A549 (cell line): ENCODE measurements at regions of chr6 and their contacts with region 1.

Region 1: GRCh38 chr6:43506667-43507471 is 3.3 kb downstream of the LRRC73 start:
- DNase-seq: peak; percentile 55 to 83
- ATAC-seq: peak; percentile 62 to 83
- H3K4me3 ChIP-seq: no peak overlapping the region
- H3K27ac ChIP-seq: no peak overlapping the region
- H3K4me1 ChIP-seq: peaks cover 9% of the 10 kb centered on the region
- CTCF ChIP-seq: peak; percentile 79
- EP300 ChIP-seq: no peak
- POLR2A ChIP-seq: no peak
- RAD21 ChIP-seq: peak; percentile 72 to 84

Region 2: DNA sequence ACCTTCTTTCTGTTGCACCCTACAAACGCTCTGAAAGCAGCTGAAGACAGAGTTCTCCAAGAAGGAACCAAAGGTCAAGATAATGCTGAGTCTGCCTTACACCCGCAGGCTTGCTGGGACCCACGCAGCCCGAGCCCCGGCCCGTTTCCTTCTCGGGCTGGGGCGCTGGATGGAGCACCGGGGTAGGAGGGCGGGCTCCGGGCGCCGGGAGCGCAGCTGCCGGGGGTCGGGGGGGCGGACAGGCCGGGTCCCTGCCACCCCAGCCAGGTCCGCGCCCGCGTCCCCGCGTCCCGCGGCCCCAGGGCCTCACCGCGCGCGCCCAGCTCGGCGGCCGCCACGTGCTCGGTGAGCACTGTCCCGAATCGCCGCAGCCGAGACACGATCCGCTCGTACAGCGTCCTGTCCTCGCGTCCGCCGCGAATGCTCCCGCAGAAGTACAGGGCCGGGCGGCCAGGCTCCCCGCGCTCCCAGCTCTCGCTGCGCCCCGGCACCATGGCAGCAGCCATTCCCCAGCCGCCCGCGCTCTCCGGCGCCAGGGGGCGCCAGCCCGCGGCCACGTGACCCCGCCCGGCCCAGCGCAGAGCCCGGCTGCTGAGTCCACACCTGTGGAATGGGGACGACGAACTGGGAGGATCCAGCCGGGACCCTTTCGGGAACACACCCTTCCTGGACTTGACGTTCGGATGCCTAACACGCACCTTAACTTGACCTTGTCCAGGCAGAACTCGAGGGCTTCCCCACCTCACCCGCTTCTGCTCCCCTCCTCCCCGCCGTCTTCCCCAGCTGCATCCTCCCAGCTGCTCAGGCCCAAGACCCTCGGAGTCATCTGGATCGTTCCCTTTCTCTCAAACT is 277.7 kb before region 1 on chr6 and contains the start of gene DNPH1:
- CTCF ChIA-PET with region 1: interaction called, 27 read pairs
- POLR2A ChIA-PET with region 1: no interaction called
- DNase-seq: peak; percentile 53 to 59
- ATAC-seq: peak; percentile 95 to 97
- H3K4me3 ChIP-seq: peak within 1 kb of the TSS; percentile 81
- H3K27ac ChIP-seq: peak within 1 kb of the TSS; percentile 90 to 97
- H3K4me1 ChIP-seq: peaks cover 3% of the 10 kb centered on the region; the same call in 1 of the 3 replicates
- CTCF ChIP-seq: peak; percentile 81
- EP300 ChIP-seq: no peak
- POLR2A ChIP-seq: peak; percentile 61
- RAD21 ChIP-seq: peak in 1 of 2 experiments; percentile 46; a peak in 4 of 5 replicates
- polyA plus RNA-seq, gene DNPH1: 51.4 and 63.2 TPM in 2 replicates

Region 3: DNA sequence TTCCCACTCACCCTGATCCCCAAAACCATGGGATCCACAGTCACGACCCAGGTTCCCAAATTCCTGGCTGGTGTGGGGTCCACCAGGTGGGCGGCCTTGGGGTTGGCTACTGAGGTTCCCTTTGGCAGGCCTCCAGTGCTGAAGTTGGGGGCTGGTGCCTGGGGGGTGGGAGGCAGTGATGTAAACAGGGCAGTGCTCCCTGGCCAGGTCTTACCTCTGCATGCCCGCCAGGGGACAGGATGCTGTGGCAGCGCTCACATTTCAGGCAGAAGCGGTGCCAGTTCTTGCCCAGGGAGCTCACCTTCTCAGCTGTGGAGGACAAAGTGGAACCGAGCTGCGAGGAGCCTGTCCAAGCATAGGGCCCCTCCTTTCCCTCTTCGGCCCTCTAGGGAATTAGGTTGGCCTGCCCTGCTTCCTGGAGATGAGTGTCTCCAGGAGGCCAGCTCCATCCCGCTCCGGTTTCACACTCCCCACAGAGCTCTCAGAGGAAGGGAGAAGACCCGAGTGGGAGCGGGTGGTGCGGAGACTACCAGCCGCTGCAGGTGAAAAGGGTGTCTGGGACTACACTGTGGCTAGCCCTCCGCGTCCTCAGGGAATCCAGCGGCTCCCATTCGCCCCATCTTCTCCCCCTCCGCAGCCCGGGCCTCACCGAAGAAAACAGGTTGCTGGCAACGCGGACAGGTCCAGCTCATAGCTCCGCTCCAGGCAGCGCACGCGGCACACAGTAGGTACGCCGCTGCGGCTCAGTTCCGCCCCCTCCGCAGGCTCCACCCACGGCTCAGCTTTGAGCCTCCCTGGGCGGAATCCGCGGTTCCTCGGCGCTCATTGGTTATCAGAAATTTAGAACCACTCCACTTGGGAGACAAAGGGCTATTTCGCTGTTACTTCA is 198.5 kb before region 1 on chr6 and contains the start of gene CRIP3:
- CTCF ChIA-PET with region 1: interaction called, 22 read pairs
- POLR2A ChIA-PET with region 1: no interaction called
- DNase-seq: peak; percentile 15 to 54
- ATAC-seq: peak; percentile 83 to 92
- H3K4me3 ChIP-seq: peak within 1 kb of the TSS; percentile 63
- H3K27ac ChIP-seq: peak within 1 kb of the TSS; percentile 50 to 55
- H3K4me1 ChIP-seq: peaks cover 12% of the 10 kb centered on the region
- CTCF ChIP-seq: peak; percentile 23; the same call in 1 of the 3 replicates
- EP300 ChIP-seq: no peak
- POLR2A ChIP-seq: no peak
- RAD21 ChIP-seq: 0 out of 5 replicates have a peak, but pooled peaks of 1 of the 2 experiments have one; percentile 21
- polyA plus RNA-seq, gene CRIP3: 1.3 and 2.6 TPM in 2 replicates

Region 4: GRCh38 chr6:43454696-43455530 is 52.0 kb before region 1 on chr6:
- CTCF ChIA-PET with region 1: interaction called, 48 read pairs
- POLR2A ChIA-PET with region 1: interaction called, 9 read pairs
- DNase-seq: peak; percentile 71 to 88
- ATAC-seq: peak; percentile 76 to 88
- H3K4me3 ChIP-seq: peak overlapping the region; percentile 55
- H3K27ac ChIP-seq: peak overlapping the region; percentile 55 to 92
- H3K4me1 ChIP-seq: peaks cover 12% of the 10 kb centered on the region; the same call in 1 of the 3 replicates
- CTCF ChIP-seq: no peak; the same call in 1 of the 3 replicates
- EP300 ChIP-seq: no peak
- POLR2A ChIP-seq: no peak
- RAD21 ChIP-seq: no peak

Region 5: DNA sequence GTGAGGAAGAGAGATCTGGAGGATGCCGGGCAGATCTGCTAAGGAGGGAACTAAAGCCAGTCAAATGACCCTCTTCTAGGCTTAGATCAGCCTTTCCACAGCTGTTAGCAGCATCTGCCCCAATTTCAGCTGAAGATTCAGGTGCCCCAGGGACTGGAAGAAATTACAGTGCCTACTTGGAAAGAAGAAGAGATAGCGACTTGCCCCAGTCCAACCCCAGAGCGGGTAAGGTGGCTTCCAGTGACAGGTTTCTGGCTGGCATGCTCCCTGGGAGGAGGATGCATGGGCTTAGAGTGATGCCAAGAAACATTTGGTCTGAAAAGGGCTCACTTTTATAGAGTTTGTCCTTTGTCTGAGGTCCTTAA is 28.9 kb before region 1 on chr6:
- CTCF ChIA-PET with region 1: interaction called, 14 read pairs
- POLR2A ChIA-PET with region 1: no interaction called
- DNase-seq: no peak
- ATAC-seq: no peak
- H3K4me3 ChIP-seq: peak overlapping the region; percentile 83
- H3K27ac ChIP-seq: peak overlapping the region; percentile 84 to 98
- H3K4me1 ChIP-seq: peaks cover 22% of the 10 kb centered on the region; the same call in 2 of the 3 replicates
- CTCF ChIP-seq: no peak
- EP300 ChIP-seq: no peak
- POLR2A ChIP-seq: no peak
- RAD21 ChIP-seq: no peak

Region 6: DNA sequence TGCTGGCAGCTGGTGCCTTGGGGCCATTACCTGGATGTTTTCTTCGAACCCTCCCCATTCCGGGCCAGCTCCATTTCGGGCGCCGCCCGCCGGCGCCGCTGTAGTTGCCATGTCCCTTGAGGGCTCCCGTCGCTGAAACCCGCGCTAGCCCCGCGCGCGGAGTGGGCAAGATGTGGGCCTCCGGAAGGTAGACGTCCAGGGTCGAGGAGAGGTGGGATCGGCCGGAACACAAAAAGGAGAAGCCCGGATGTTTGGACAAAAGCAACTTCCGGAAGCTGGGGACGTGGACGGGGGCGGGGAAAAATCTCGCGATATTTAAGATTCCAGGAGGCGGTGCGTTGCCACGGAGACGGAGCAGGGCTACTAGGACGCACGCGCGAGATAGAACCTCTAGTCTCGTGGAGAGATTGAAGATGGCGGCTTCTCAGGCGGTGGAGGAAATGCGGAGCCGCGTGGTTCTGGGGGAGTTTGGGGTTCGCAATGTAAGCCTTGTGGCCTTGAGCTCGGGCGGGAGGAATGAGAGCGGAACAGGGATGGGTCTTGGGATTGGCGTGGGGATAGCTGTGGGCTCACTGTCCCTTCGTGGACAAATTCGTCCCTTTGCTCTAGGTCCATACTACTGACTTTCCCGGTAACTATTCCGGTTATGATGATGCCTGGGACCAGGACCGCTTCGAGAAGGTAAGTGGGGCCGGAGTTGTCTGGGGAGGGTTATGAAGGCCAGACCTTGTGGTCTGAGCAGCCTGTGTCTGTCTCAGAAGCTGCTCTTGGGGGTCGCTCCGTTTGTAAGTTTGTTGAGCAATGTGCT is 10.0 kb after region 1 on chr6 and contains the starts of genes POLR1C and YIPF3:
- CTCF ChIA-PET with region 1: interaction called, 12 read pairs
- POLR2A ChIA-PET with region 1: no interaction called
- DNase-seq: peak; percentile 81 to 96
- ATAC-seq: peak; percentile 85 to 93
- H3K4me3 ChIP-seq: peak within 1 kb of the TSS; percentile 93
- H3K27ac ChIP-seq: peak within 1 kb of the TSS; percentile 86 to 97
- H3K4me1 ChIP-seq: peaks cover 19% of the 10 kb centered on the region
- CTCF ChIP-seq: no peak
- EP300 ChIP-seq: no peak
- POLR2A ChIP-seq: peak; percentile 86
- RAD21 ChIP-seq: no peak
- polyA plus RNA-seq, gene POLR1C: 63.1 and 85.1 TPM in 2 replicates
- polyA plus RNA-seq, gene YIPF3: 99.5 and 108 TPM in 2 replicates